GM12878 (cell line): ENCODE measurements at regions of chr4 and their contacts with region 1.

Region 1: DNA sequence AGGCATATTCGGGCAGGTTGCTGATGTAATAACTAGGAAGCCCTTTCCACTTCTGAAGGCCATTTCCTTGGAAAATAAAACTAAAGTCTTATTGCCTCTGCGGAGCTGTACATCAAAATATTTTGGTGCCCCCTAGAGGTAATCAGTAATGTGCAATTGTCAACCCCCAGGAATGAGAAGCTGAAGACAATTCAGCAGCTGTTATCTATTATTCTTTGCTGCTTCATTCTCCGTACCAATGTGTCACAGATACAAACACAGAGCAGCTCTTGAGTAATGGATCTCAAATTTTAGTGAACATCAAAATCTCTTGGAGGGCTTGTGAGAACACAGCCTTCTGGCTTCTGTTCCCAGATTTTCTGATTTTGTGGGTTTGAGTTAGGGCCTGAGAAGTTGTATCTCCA is 3.5 kb upstream of the SLIT2 start:
- DNase-seq: no peak
- ATAC-seq: peak; percentile 66
- H3K4me3 ChIP-seq: no peak overlapping the region
- H3K27ac ChIP-seq: no peak overlapping the region
- H3K4me1 ChIP-seq: no peaks in the 10 kb centered on the region
- H3K27me3 ChIP-seq: peaks cover 2 to 5% of the 10 kb centered on the region in 2 experiments; a peak in 2 of 4 replicates
- CTCF ChIP-seq: peak; percentile 44 to 50 (median 47)
- EP300 ChIP-seq: no peak
- POLR2A ChIP-seq: no peak
- RAD21 ChIP-seq: peak; percentile 54

Region 2: GRCh38 chr4:19224820-19225219 is 1023.3 kb before region 1 on chr4:
- CTCF ChIA-PET with region 1: interaction called, 9 read pairs
- POLR2A ChIA-PET with region 1: no interaction called
- RAD21 ChIA-PET with region 1: no interaction called
- SMC1A ChIA-PET with region 1: interaction called, 6 read pairs
- in situ Hi-C with region 1: no loop called
- intact Hi-C with region 1: loop called (anchors 5 kb)
- DNase-seq: no peak
- ATAC-seq: no peak
- H3K4me3 ChIP-seq: no peak overlapping the region
- H3K27ac ChIP-seq: no peak overlapping the region
- H3K4me1 ChIP-seq: no peaks in the 10 kb centered on the region
- H3K27me3 ChIP-seq: no peaks in the 10 kb centered on the region
- CTCF ChIP-seq: peak in 1 of 3 experiments; percentile 14; a peak in 2 of 6 replicates
- EP300 ChIP-seq: no peak
- POLR2A ChIP-seq: no peak
- RAD21 ChIP-seq: 0 out of 2 replicates have a peak, but pooled peaks have one; percentile 20